ENCODE measurements at regions of chr20 and their contacts with region 1.

Region 1: DNA sequence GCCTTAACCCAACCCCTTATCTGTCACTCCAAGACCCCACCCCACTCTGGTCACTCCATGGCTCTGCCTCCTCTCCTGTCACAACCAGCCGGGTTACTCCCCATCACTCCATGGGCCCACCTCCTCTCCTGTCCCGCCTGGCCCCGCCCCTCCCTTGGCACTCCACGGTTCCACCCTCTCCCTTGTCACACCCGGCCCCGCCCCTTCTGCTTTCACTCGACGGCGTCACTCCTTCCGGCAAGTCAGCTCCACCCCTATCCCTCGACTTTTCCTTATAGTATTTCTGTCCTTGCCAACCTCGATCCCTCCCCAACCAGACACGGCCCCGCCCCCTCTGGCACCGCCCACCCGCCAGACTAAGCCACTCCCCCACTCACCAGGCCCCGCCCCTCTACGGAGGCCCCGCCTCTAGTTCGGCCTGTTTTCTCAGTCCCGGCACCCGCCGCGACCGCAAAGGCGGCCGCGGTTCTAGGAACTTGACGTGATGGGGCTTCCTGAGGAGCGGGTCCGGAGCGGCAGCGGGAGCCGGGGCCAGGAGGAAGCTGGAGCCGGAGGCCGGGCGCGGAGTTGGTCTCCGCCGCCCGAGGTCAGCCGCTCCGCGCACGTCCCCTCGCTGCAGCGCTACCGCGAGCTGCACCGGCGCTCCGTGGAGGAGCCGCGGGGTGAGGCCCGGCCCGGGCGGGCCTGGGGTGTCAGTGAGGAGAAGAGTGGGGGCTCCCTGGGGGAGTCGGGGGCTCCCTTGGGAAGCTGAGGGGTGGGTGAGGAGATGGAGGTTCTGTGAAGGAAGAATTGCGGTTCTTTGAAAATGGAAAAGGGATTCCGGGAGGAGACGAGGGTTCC is at the start of gene ACSS2:
- DNase-seq: peak; percentile 95
- H3K4me3 Mint-ChIP-seq: peak within 1 kb of the TSS; percentile 96
- H3K27ac Mint-ChIP-seq: peak within 1 kb of the TSS; percentile 82
- H3K4me1 Mint-ChIP-seq: peaks cover 73% of the 10 kb centered on the region
- H3K27me3 Mint-ChIP-seq: peaks cover 4% of the 10 kb centered on the region
- total RNA-seq, gene ACSS2: 38.0 and 45.3 TPM in 2 replicates

Region 2: DNA sequence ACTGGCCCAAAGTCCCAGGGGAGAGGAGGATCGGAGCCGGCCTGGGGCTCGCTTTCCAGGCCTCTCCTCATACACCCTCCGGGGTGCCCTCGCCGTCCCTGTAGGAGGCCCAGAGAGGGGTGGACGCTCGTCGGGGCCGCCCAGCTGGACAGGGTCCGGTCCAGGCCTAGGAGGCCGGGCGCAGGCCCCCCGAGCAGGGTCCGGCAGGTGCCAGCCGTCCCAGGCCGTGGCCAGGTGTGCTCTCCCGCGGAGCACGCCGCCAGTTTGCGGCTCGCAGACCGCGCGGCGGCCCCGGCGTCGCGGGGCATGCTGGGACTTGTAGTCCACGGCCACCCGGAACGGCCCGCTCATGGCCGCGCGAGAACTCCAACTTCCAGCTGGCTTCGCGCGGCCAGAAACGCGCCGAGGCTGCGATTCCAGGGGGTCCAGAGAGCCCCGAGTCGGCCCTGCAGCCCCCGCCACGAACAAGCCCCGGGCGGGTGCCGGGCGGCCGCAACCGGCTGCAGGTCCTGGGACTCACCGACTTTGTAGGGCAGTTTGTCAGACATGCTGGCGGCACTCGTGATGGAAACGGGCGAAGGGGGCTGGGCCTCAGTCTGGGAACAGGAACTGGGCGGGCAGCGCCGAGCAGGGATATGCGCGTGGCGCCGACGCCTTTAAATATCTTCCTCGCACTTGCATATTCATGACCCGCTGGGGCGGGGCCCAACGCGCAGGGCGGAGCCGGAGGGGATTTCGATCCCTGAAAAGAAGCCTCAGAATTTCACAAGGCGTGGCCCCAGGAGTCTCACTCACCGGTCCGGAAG is 573.5 kb before region 1 on chr20 and contains the start of gene AHCY:
- intact Hi-C with region 1: loop called (anchors 1 kb)
- DNase-seq: peak; percentile 93
- H3K4me3 Mint-ChIP-seq: peak within 1 kb of the TSS; percentile 83
- H3K27ac Mint-ChIP-seq: peak within 1 kb of the TSS; percentile 92
- H3K4me1 Mint-ChIP-seq: peaks cover 19% of the 10 kb centered on the region
- H3K27me3 Mint-ChIP-seq: no peaks in the 10 kb centered on the region
- total RNA-seq, gene AHCY: 130 and 132 TPM in 2 replicates

Region 3: GRCh38 chr20:34676642-34677373 is 199.6 kb before region 1 on chr20 and contains the start of gene PIGU:
- intact Hi-C with region 1: loop called (anchors 1 kb)
- DNase-seq: peak; percentile 97
- H3K4me3 Mint-ChIP-seq: peak within 1 kb of the TSS; percentile 97
- H3K27ac Mint-ChIP-seq: peak within 1 kb of the TSS; percentile 97
- H3K4me1 Mint-ChIP-seq: peaks cover 27% of the 10 kb centered on the region
- H3K27me3 Mint-ChIP-seq: no peaks in the 10 kb centered on the region
- total RNA-seq, gene PIGU: 24.8 and 25.9 TPM in 2 replicates

Region 4: DNA sequence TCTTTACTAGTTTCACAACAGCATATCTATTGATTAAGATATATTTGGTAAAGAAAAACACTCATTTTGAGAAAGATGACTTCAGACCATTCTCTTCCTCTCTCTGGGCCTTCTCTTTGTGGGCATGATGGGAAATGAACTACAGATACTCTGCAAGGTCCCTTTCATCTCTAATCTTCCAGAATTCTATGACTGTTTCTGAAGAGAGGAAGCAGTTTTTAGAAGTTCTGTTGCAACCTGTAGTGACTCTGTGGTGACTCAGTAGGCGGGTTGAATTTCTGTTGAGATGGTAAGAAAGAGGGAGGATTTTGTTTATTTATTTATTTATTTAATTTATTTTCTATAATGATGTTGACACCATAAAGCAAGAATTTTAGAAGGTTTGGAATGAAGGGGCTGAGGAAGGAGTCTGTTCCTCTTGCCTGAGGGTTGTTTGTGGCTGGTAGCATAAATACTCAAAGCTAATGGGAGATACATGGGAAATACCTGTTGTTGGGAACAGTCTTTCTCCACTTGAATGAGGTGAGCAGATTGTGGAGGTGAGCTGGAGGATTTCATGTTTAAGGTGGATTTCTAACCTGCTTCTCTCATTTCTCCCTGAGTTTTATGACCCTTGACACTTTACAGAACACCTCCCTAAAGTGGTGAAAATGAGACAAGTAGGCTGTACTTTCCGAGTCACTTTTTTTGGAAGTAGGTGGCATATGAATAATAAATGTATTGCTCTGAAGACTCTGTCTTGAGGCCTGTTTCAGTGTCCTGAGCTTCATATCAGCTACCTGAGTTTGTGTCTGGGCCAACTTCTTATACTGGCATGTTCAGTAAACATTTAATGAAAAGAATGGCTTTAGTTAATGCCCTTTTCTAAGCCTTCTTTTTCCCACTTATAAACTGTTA is 15.0 kb after region 1 on chr20:
- intact Hi-C with region 1: loop called (anchors 1 kb)
- DNase-seq: no peak
- H3K4me3 Mint-ChIP-seq: peak overlapping the region; percentile 43
- H3K27ac Mint-ChIP-seq: peak overlapping the region; percentile 76
- H3K4me1 Mint-ChIP-seq: peaks cover 59% of the 10 kb centered on the region
- H3K27me3 Mint-ChIP-seq: no peaks in the 10 kb centered on the region

Region 5: GRCh38 chr20:34955232-34956040 is 79.1 kb after region 1 on chr20 and contains the starts of genes GSS and MYH7B:
- intact Hi-C with region 1: loop called (anchors 1 kb)
- DNase-seq: peak; percentile 97
- H3K4me3 Mint-ChIP-seq: peak within 1 kb of the TSS; percentile 94
- H3K27ac Mint-ChIP-seq: peak within 1 kb of the TSS; percentile 95
- H3K4me1 Mint-ChIP-seq: peaks cover 24% of the 10 kb centered on the region
- H3K27me3 Mint-ChIP-seq: peaks cover 3% of the 10 kb centered on the region
- total RNA-seq, gene GSS: 64.1 and 68.0 TPM in 2 replicates
- total RNA-seq, gene MYH7B: 0.20 and 0.44 TPM in 2 replicates

Region 6: GRCh38 chr20:35092524-35093266 is 216.3 kb after region 1 on chr20 and contains the start of gene TRPC4AP:
- intact Hi-C with region 1: loop called (anchors 1 kb)
- DNase-seq: peak; percentile 88
- H3K4me3 Mint-ChIP-seq: peak within 1 kb of the TSS; percentile 92
- H3K27ac Mint-ChIP-seq: peak within 1 kb of the TSS; percentile 94
- H3K4me1 Mint-ChIP-seq: peaks cover 48% of the 10 kb centered on the region
- H3K27me3 Mint-ChIP-seq: no peaks in the 10 kb centered on the region
- total RNA-seq, gene TRPC4AP: 53.9 and 54.0 TPM in 2 replicates

Region 7: GRCh38 chr20:35207950-35208611 is 331.7 kb after region 1 on chr20:
- intact Hi-C with region 1: loop called (anchors 1 kb)
- DNase-seq: peak; percentile 58
- H3K4me3 Mint-ChIP-seq: no peak overlapping the region
- H3K27ac Mint-ChIP-seq: no peak overlapping the region
- H3K4me1 Mint-ChIP-seq: no peaks in the 10 kb centered on the region
- H3K27me3 Mint-ChIP-seq: no peaks in the 10 kb centered on the region

Measured in activated T-helper 1 cell treated with anti-CD3 and anti-CD28 coated beads, Interleukin-12 subunit alpha, Interleukin-12 subunit beta, Interleukin-2, Interleukin-4 antibody, amounts not matched to agents 30 ng/mL and 10 ng/mL and 1 ng/mL, durations not matched to agents 14 hours and 24 hours and 36 hours (primary cell).